ENCODE measurements at regions of chr5 and their contacts with region 1.

Region 1: DNA sequence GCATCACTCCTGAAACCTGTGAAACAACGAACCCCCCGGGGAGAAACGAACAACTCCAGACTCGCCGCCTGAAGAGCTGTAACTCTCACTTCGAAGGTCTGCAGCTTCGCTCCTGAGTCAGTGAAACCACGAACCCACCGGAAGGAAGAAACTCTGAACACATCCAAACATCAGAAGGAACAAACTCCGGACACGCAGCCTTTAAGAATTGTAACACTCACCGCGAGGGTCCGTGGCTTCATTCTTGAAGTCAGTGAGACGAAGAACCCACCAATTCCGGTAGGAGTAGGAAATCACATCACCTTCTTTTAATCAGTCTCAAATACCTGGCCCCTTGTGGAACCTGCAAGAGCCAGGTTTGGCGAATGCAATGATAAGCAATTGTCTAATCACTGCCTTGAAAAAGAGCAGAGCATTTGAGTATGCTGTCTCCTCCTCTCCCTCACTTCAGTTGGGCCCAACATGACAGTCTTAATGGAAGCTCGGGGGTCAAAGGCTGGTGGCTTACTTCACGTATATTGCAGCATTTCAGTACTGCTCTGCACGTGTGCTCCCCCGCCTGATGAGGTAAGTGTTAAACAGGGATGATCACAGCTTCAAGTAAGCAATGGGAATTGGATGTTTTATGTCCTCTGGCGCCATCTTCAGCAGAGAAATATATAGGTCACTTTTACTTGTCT is 473 bp downstream of the IRGM start:
- DNase-seq: peak in 1 of 2 donors; percentile 51
- ATAC-seq: peak; percentile 88
- H3K4me3 ChIP-seq: no peak overlapping the region
- H3K27ac ChIP-seq: no peak overlapping the region
- H3K4me1 ChIP-seq: no peaks in the 10 kb centered on the region
- H3K27me3 ChIP-seq: no peaks in the 10 kb centered on the region

Region 2: GRCh38 chr5:150449517-150450339 is 397.1 kb before region 1 on chr5 and contains the start of gene RPS14:
- intact Hi-C with region 1: loop called in 1 of 2 experiments (anchors 10 kb)
- DNase-seq: peak; percentile 97 to 98
- ATAC-seq: peak; percentile 98
- H3K4me3 ChIP-seq: peak within 1 kb of the TSS; percentile 49 to 78
- H3K27ac ChIP-seq: peak within 1 kb of the TSS; percentile 49 to 79
- H3K4me1 ChIP-seq: peaks cover 0 to 1% of the 10 kb centered on the region in 2 donors
- H3K27me3 ChIP-seq: no peaks in the 10 kb centered on the region
- total RNA-seq, gene RPS14: 1,419 to 1,480 TPM

Region 3: DNA sequence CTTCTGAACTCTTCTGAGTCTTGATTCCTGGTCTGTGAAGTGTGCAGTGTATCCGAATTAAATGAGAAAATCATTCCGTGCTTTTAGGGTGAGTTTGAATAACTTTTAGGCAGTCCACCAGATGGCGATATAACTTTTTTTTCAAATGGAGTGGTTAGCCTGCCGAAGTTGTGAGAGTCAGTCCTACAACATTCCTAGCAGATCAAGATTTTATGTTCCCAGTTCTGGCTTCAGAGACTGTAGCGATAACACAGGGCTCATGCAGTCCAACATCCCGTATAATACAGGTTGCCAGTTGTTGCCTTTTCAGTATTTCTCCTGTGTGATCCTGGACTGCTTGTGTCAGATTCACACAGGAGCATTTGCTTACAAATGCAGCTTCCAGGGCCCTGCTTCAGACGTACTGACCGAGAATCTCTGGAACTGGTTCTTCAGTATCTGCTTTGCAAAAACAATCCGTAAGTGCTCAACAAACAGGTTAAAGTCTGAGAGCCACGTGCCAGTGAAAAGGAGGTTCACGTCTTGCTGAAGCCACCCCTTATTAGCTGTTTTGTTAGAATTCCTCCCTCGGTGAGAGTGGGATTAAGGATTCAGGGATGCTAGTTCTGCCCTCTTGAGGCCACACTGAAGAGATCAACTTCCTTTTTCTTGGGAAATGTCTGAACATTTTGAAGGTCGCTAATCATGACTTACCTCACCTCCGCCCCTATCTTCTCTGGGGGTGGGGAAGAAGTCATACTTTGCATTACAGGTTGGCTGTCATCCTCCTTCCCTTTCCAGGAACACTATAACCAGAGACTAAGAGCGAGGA is 45.5 kb before region 1 on chr5:
- intact Hi-C with region 1: loop called in 1 of 2 experiments (anchors 5 kb)
- DNase-seq: no peak
- ATAC-seq: peak; percentile 89
- H3K4me3 ChIP-seq: peak overlapping the region; percentile 8 to 48
- H3K27ac ChIP-seq: peak overlapping the region in 1 of 2 donors; percentile 44
- H3K4me1 ChIP-seq: no peaks in the 10 kb centered on the region
- H3K27me3 ChIP-seq: no peaks in the 10 kb centered on the region

Region 4: DNA sequence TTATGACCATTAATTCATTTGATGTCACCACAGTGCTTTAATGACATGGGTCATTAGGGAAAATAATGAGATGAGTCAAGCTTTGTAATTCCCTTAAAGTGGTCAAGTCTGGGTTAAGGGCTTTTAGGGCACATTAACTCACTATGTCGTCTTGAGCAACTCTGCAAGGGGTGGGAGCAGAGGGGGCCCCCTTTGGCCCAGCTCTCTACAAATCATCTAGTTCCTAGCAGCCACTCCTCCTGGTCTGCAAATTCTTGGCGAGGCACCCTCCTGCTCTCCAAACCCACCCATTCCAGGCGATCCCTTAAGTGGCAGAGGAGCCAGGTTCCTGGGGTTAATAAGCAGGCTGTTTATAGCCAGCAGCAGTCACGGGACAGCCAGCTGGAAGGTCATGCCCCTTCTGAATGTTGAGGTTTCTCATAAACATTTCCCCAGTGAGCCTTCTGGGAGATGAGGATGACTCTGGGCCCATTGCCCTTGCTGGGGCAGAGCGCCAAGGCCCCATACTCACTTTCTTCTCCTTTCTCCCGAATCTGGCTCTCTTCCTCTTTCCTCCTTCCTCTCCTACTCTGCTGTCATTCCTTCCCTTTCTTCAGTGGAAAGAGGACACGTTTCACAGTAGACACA is 159.3 kb after region 1 on chr5:
- intact Hi-C with region 1: no loop called
- DNase-seq: peak; percentile 90 to 92
- ATAC-seq: peak; percentile 89
- H3K4me3 ChIP-seq: no peak overlapping the region
- H3K27ac ChIP-seq: no peak overlapping the region
- H3K4me1 ChIP-seq: no peaks in the 10 kb centered on the region
- H3K27me3 ChIP-seq: no peaks in the 10 kb centered on the region

Measured in aorta (tissue), 5 donors.